AG04449 (cell line): ENCODE measurements at regions of chr2 and their contacts with region 1.

Region 1: GRCh38 chr2:85302121-85302520 is 25.7 kb downstream of the TGOLN2 start:
- DNase-seq: no peak
- H3K4me3 ChIP-seq: no peak overlapping the region
- CTCF ChIP-seq: no peak

Region 2: DNA sequence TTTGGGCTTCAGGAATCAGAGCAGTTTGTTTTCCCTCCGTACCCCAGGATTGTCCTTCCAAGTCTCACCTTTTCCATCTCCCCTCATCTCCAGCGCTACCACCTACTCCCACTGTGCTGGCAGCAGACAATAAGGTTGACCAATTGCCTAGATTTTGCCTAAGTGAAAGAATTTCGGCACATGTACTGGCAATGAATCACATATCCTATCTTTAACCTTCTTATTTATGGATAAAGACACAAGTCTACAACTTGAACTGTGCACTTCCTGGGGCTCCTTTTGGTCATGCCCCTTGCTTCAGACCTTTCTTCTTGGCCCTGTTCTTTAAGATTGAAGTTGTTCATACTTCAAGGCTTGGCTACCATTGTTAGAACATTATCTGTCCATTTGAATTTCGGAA is 259.8 kb before region 1 on chr2:
- CTCF ChIA-PET with region 1: interaction called, 20 read pairs
- POLR2A ChIA-PET with region 1: no interaction called
- DNase-seq: no peak
- H3K4me3 ChIP-seq: no peak overlapping the region
- CTCF ChIP-seq: no peak

Region 3: GRCh38 chr2:85053802-85054201 is 248.3 kb before region 1 on chr2:
- CTCF ChIA-PET with region 1: interaction called, 15 read pairs
- POLR2A ChIA-PET with region 1: no interaction called
- DNase-seq: no peak
- H3K4me3 ChIP-seq: no peak overlapping the region
- CTCF ChIP-seq: no peak

Region 4: GRCh38 chr2:85111819-85112281 is 190.3 kb before region 1 on chr2:
- CTCF ChIA-PET with region 1: interaction called, 20 read pairs
- POLR2A ChIA-PET with region 1: no interaction called
- DNase-seq: no peak
- H3K4me3 ChIP-seq: no peak overlapping the region
- CTCF ChIP-seq: no peak

Region 5: DNA sequence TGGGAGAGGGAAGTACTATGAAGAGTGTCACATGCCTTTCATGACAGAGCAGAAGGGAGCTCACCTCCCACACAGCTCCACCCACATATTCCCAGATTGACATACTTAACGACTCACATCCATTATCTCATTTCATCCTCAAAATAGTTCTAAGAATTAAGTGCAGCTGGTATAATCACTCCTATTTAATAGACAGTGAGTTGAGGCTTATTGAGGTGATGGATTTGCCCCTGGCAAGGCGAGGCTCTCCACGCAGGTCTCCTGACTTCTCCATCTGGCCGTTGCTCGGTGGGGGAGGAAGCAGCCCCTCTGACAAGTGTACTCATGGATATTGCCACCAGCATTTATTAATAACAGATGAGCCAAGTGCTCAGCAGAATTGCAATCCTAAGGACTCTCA is 55.8 kb before region 1 on chr2:
- CTCF ChIA-PET with region 1: interaction called, 11 read pairs
- POLR2A ChIA-PET with region 1: no interaction called
- DNase-seq: no peak
- H3K4me3 ChIP-seq: no peak overlapping the region
- CTCF ChIP-seq: no peak

Region 6: GRCh38 chr2:85318222-85319074 is 16.3 kb after region 1 on chr2:
- CTCF ChIA-PET with region 1: interaction called, 12 read pairs
- POLR2A ChIA-PET with region 1: no interaction called
- DNase-seq: peak; percentile 41
- H3K4me3 ChIP-seq: no peak overlapping the region
- CTCF ChIP-seq: no peak